ENCODE measurements at regions of chr3 and their contacts with region 1.

Region 1: GRCh38 chr3:15268033-15268631 is 62.1 kb downstream of the CAPN7 start:
- DNase-seq: peak; percentile 88
- H3K4me3 ChIP-seq: no peak overlapping the region
- H3K27ac ChIP-seq: peak overlapping the region; percentile 93 to 98
- H3K4me1 ChIP-seq: peaks cover 15 to 25% of the 10 kb centered on the region in 2 donors
- H3K27me3 ChIP-seq: no peaks in the 10 kb centered on the region
- CTCF ChIP-seq: peak; percentile 93 to 97 (median 95)
- POLR2A ChIP-seq: no peak

Region 2: DNA sequence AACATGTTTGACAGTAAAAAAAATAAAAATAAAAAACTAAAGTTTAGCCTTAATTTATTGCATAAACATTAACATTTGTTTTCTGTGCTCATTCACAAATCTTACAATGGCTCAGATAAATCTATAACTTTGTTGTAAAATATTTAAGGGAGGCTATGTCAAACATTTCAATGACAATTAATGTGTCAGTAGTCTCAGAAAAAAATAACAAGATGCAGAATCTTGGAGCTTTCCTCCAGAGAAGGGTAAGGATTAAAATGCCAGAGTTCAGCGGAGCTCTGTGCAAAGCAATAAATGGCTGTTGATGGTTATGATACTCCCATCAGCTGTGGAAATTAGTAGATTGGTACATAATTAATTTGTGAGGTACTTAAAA is 82.0 kb before region 1 on chr3:
- intact Hi-C with region 1: no loop called
- DNase-seq: no peak
- H3K4me3 ChIP-seq: no peak overlapping the region
- H3K27ac ChIP-seq: no peak overlapping the region
- H3K4me1 ChIP-seq: no peaks in the 10 kb centered on the region
- H3K27me3 ChIP-seq: no peaks in the 10 kb centered on the region
- CTCF ChIP-seq: no peak
- POLR2A ChIP-seq: no peak

Region 3: GRCh38 chr3:15332405-15333098 is 64.4 kb after region 1 on chr3 and contains the start of gene SH3BP5:
- intact Hi-C with region 1: loop called (anchors 2 kb)
- DNase-seq: peak; percentile 73 to 83
- H3K4me3 ChIP-seq: peak within 1 kb of the TSS; percentile 72 to 95
- H3K27ac ChIP-seq: peak within 1 kb of the TSS; percentile 93 to 97
- H3K4me1 ChIP-seq: peaks cover 17 to 19% of the 10 kb centered on the region in 2 donors
- H3K27me3 ChIP-seq: no peaks in the 10 kb centered on the region
- CTCF ChIP-seq: peak; percentile 75 to 96 (median 91)
- POLR2A ChIP-seq: peak in 1 of 2 donors; percentile 90
- total RNA-seq, gene SH3BP5: 58.8 to 154 (median 75.5) TPM

Region 4: GRCh38 chr3:15377961-15378791 is 110.0 kb after region 1 on chr3:
- intact Hi-C with region 1: loop called (anchors 5 kb)
- DNase-seq: peak; percentile 96 to 97
- H3K4me3 ChIP-seq: no peak overlapping the region
- H3K27ac ChIP-seq: peak overlapping the region; percentile 75
- H3K4me1 ChIP-seq: no peaks in the 10 kb centered on the region
- H3K27me3 ChIP-seq: no peaks in the 10 kb centered on the region
- CTCF ChIP-seq: peak; percentile 85 to 97 (median 93)
- POLR2A ChIP-seq: no peak

Region 5: GRCh38 chr3:16378920-16379319 is 1110.8 kb after region 1 on chr3:
- intact Hi-C with region 1: no loop called
- DNase-seq: no peak
- H3K4me3 ChIP-seq: no peak overlapping the region
- H3K27ac ChIP-seq: no peak overlapping the region
- H3K4me1 ChIP-seq: peaks cover 0 to 3% of the 10 kb centered on the region in 2 donors
- H3K27me3 ChIP-seq: no peaks in the 10 kb centered on the region
- CTCF ChIP-seq: no peak
- POLR2A ChIP-seq: no peak

Measured in uterus (tissue), 4 donors.